Prostate gland (tissue), 2 donors: ENCODE measurements at regions of chr9 and their contacts with region 1.

Region 1: DNA sequence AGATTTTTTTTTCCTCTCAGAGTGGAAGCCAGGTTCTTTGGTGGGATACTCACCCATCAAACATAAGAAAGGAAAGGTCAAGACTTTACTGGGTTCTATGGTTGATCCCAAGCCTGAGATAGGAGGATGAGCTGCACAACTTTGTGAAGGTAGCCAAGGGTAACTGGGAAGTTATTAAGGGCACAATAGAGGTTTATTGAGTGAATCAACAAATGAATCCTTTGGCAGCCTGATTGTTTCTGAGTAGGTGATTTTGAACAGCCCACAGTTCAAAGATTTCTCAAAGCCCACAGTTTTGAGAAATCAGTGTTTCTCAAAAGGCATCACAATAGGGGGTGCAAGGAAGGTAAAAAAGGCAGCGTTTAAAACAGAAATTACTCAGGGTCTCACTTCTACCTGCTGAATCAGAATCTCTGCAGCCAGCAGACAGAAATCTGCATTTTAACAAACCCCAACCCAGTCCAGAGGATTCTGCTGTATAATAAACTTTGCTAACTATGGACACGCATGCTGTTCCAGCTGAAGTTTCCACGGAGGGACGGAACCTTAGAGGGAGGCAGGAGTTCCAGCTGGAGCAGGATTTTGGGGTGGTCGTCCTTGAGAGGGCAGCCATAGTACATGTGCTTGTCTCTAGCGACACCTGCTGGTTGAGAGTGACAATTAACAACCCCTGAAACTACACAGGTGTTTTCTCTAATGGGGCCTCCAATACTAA is 32.7 kb upstream of the FSD1L start:
- DNase-seq: peak; percentile 58
- H3K4me3 ChIP-seq: no peak overlapping the region
- H3K27ac ChIP-seq: no peak overlapping the region
- H3K4me1 ChIP-seq: no peaks in the 10 kb centered on the region
- H3K27me3 ChIP-seq: no peaks in the 10 kb centered on the region
- CTCF ChIP-seq: peak; percentile 78 to 87 (median 84)
- POLR2A ChIP-seq: no peak

Region 2: DNA sequence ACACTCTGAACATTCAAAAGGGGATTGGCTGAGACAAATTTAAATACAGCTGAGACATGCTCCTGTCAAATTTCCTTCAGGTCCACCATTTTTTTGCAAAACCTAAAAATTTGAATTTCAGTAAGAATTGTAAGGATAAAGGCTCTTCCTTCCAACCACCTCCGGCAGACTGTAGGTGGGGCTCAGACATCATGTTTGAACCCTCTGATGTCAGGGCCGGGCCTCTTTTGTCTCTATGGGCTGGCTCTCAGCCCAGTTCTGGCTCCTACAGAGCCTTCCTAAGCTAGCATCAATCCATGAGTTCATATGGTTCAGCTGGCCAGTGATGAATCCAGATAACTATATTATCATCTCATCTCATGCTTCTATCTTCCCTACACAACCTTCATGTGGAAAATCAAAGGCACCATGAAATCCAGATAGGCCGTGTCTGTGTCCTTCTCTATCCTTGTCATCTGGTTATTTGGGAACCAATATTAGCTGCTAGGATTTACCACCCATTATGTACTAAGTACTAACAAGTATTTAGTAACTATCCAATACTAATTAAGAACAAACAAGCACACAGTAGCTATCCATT is 607.0 kb before region 1 on chr9:
- intact Hi-C with region 1: loop called (anchors 10 kb)
- DNase-seq: no peak
- H3K4me3 ChIP-seq: no peak overlapping the region
- H3K27ac ChIP-seq: no peak overlapping the region
- H3K4me1 ChIP-seq: no peaks in the 10 kb centered on the region
- H3K27me3 ChIP-seq: no peaks in the 10 kb centered on the region
- CTCF ChIP-seq: no peak
- POLR2A ChIP-seq: no peak

Region 3: DNA sequence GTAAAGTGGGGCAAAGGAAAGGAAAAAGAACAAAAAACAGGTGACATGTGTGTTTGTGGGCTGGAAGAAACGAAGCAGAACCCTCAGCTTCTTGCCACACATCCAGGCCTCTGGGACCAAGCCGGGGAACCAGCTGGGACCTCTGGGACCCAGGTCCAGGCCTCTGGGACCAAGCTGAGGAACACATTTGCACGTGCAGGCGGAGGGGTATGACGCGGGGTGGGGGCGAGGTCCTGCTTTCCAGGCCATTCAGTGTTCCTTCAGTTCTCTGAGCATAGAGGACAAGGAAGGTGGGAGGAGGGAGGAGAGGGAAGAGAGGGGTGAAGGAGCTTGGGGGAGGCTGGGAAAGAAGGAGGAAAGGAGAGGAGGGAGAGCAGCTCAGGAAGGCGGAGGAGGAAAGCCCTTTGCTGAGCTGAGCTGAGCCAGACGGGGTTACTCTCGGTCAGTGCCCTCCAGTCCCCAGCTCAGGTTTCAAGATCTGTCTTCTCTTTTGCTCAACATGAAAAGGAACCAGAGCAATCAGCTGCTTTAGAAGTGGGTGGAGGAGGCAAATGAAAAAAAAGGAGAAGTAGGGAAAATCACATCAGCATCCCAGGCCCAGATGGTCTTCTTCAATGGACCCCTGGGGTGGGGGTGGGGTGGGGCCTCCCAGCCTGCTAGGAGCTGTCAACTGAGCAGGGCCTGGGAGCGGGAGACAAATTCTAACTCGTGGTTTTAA is 546.3 kb before region 1 on chr9:
- intact Hi-C with region 1: loop called (anchors 5 kb)
- DNase-seq: peak; percentile 25
- H3K4me3 ChIP-seq: no peak overlapping the region
- H3K27ac ChIP-seq: peak overlapping the region; percentile 22 to 51
- H3K4me1 ChIP-seq: peaks cover 4% of the 10 kb centered on the region
- H3K27me3 ChIP-seq: no peaks in the 10 kb centered on the region
- CTCF ChIP-seq: no peak
- POLR2A ChIP-seq: no peak

Region 4: DNA sequence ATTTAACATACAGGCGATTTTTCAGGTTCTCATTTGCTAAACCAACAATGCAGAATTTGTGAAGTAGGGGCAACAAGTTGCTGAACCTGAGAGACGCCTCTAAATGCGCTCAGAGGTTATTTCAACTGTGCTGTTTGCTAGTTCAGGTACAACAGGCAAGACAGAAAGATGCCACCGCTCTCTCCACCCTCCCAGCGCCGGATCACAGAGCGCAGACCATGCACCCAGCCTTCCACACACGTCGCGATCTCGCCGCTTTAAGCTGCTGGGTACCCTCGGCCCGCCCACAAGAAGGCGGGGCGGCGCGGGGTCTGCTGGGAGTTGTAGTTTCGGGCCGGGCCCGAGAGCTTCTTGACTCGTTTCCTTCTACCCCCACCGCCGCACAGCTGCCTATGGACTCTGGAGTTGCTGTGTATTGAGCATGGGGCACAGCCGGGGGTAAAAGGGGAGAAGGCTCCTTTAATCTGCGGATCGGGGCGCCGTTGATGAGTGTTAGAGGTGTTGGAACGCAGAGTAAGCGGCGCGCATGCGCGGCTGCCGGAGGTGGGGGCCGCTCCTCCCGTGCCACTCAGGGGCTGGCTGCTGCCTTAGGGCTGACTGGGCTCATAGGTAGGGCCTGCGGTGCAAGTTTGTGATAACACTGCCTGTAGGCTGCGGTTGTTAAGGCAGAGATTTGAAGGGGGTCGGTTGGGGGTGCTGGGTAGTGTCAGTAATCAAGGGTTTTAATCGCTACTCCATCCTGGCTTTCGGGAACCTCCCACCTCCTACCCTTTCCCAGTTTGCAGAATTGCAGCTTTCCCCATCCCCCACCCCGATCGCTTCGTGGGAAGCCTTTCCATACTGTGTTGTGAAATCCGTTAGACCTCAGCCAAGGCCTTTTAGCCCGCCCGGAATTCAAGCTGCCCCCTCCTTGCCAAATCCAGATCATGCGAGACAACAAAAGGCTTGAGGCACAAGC is 446.8 kb before region 1 on chr9:
- intact Hi-C with region 1: loop called (anchors 10 kb)
- DNase-seq: peak; percentile 80
- H3K4me3 ChIP-seq: peak overlapping the region; percentile 45 to 51
- H3K27ac ChIP-seq: peak overlapping the region; percentile 76 to 81
- H3K4me1 ChIP-seq: no peaks in the 10 kb centered on the region
- H3K27me3 ChIP-seq: no peaks in the 10 kb centered on the region
- CTCF ChIP-seq: peak in 1 of 4 experiments; percentile 1
- POLR2A ChIP-seq: no peak

Region 5: GRCh38 chr9:105157130-105157583 is 257.9 kb before region 1 on chr9:
- intact Hi-C with region 1: loop called (anchors 5 kb)
- DNase-seq: peak; percentile 26
- H3K4me3 ChIP-seq: no peak overlapping the region
- H3K27ac ChIP-seq: no peak overlapping the region
- H3K4me1 ChIP-seq: no peaks in the 10 kb centered on the region
- H3K27me3 ChIP-seq: no peaks in the 10 kb centered on the region
- CTCF ChIP-seq: peak in 3 of 4 experiments; percentile 54 to 66 (median 60)
- POLR2A ChIP-seq: no peak